Tibial artery (tissue), 4 donors: ENCODE measurements at regions of chr7 and their contacts with region 1.

Region 1: GRCh38 chr7:50793115-50793946 is 10.6 kb upstream of the GRB10 start:
- DNase-seq: peak; percentile 59 to 83
- H3K4me3 ChIP-seq: peak overlapping the region; percentile 57 to 65
- H3K27ac ChIP-seq: peak overlapping the region; percentile 73 to 80
- H3K4me1 ChIP-seq: peaks cover 0 to 27% (median 18%) of the 10 kb centered on the region in 4 donors
- H3K27me3 ChIP-seq: no peaks in the 10 kb centered on the region
- CTCF ChIP-seq: no peak

Region 2: GRCh38 chr7:50474382-50475160 is 318.8 kb before region 1 on chr7:
- intact Hi-C with region 1: loop called (anchors 5 kb)
- DNase-seq: no peak
- H3K4me3 ChIP-seq: no peak overlapping the region
- H3K27ac ChIP-seq: no peak overlapping the region
- H3K4me1 ChIP-seq: peaks cover 0 to 9% (median 5%) of the 10 kb centered on the region in 4 donors
- H3K27me3 ChIP-seq: peaks cover 0 to 5% of the 10 kb centered on the region in 2 donors
- CTCF ChIP-seq: no peak

Region 3: GRCh38 chr7:50653126-50653864 is 140.0 kb before region 1 on chr7:
- intact Hi-C with region 1: loop called (anchors 10 kb)
- DNase-seq: peak; percentile 85 to 86
- H3K4me3 ChIP-seq: peak overlapping the region in 1 of 2 donors; percentile 1
- H3K27ac ChIP-seq: peak overlapping the region; percentile 41 to 74
- H3K4me1 ChIP-seq: peaks cover 2 to 58% (median 48%) of the 10 kb centered on the region in 4 donors
- H3K27me3 ChIP-seq: no peaks in the 10 kb centered on the region
- CTCF ChIP-seq: no peak

Region 4: DNA sequence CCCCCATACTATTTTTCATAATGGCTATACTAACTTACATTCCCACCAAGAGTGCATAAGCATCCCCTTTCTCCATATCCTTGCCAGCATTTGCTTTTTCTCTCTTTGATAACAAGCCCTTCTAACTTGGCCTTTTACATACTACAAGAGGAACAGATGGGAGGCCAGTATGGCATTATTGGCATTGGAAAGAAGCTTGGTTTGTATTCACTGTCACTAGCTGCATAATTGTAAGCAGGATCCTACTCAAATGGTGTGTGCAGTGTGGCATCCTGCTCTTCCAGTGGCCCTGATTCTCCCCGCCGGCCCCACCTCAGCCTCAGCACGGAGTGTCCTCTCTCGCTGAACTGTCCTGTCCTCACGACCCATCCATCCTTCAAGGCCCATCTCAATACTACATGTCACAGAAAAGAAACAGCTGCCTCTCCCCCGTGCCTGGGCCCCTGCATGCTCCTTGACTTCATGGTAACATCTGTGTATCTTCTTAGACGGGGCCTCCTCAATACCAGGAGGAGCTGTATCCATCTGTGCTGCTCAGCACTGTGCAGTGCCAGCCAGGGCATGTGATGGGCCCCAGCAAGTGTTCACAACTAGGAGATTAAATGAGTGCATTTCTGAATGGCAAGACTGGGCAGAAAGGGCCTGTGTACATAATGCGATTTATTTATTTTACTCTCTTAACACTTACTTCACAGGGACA is 318.1 kb after region 1 on chr7:
- intact Hi-C with region 1: no loop called
- DNase-seq: no peak
- H3K4me3 ChIP-seq: no peak overlapping the region
- H3K27ac ChIP-seq: no peak overlapping the region
- H3K4me1 ChIP-seq: no peaks in the 10 kb centered on the region
- H3K27me3 ChIP-seq: no peaks in the 10 kb centered on the region
- CTCF ChIP-seq: no peak

Region 5: GRCh38 chr7:51187941-51188340 is 394.6 kb after region 1 on chr7:
- intact Hi-C with region 1: no loop called
- DNase-seq: no peak
- H3K4me3 ChIP-seq: no peak overlapping the region
- H3K27ac ChIP-seq: no peak overlapping the region
- H3K4me1 ChIP-seq: no peaks in the 10 kb centered on the region
- H3K27me3 ChIP-seq: no peaks in the 10 kb centered on the region
- CTCF ChIP-seq: no peak